ENCODE measurements at regions of chr16 and their contacts with region 1.

Region 1: DNA sequence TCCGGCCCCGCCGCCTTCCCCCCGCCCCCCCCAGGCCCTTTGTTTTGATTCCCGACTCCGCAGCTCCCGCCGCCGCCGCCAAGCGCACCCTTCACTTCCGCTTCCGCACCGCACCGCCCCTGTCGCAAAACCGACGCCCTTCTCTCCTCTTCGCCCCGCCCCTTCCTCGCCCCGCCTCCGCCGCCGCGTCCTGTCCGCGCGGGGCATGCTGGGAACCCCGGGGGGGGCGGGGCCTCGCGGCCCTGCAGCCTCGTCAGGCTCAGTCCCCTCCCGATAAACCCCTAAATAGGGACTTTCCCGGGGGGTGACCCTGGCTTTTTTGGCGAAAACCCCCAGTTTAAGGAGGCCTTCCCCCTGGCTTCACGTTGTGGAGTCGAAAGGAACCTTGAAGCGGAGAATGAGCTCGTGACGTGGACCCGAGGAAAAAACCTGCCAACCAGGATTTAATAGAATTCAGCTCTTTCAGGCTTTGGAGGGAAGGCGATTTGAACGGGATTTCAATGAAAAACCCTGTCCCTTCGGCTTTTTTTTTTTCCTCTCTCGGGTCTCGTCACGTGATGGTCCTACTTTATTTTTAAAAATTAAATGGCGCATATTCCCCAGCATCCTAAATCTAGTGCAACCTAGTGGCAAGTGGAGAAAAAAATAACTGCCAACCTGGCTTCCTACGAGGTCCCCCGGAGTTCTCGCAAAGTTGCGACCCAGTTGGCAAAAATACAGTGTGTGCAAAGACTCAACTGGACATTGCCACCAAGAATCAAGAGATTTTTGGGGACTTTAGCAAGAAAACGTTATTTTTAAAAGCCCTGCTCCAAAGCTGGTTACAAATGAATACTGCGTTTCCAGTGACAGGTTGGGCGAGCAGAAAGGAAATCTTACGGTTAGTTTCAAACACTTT is at the start of gene MARF1:
- DNase-seq: peak; percentile 96
- H3K4me3 Mint-ChIP-seq: peak within 1 kb of the TSS; percentile 78
- H3K27ac Mint-ChIP-seq: peak within 1 kb of the TSS; percentile 97
- H3K4me1 Mint-ChIP-seq: peaks cover 20% of the 10 kb centered on the region
- H3K27me3 Mint-ChIP-seq: no peaks in the 10 kb centered on the region
- CTCF ChIP-seq: peak; percentile 29
- total RNA-seq, gene MARF1: 48.1 and 56.2 TPM in 2 replicates

Region 2: GRCh38 chr16:15592324-15592723 is 51.0 kb before region 1 on chr16:
- CTCF ChIA-PET with region 1: interaction called, 6 read pairs
- POLR2A ChIA-PET with region 1: interaction called, 24 read pairs
- intact Hi-C with region 1: no loop called
- DNase-seq: no peak
- H3K4me3 Mint-ChIP-seq: no peak overlapping the region
- H3K27ac Mint-ChIP-seq: no peak overlapping the region
- H3K4me1 Mint-ChIP-seq: peaks cover 17% of the 10 kb centered on the region
- H3K27me3 Mint-ChIP-seq: no peaks in the 10 kb centered on the region
- CTCF ChIP-seq: no peak

Region 3: DNA sequence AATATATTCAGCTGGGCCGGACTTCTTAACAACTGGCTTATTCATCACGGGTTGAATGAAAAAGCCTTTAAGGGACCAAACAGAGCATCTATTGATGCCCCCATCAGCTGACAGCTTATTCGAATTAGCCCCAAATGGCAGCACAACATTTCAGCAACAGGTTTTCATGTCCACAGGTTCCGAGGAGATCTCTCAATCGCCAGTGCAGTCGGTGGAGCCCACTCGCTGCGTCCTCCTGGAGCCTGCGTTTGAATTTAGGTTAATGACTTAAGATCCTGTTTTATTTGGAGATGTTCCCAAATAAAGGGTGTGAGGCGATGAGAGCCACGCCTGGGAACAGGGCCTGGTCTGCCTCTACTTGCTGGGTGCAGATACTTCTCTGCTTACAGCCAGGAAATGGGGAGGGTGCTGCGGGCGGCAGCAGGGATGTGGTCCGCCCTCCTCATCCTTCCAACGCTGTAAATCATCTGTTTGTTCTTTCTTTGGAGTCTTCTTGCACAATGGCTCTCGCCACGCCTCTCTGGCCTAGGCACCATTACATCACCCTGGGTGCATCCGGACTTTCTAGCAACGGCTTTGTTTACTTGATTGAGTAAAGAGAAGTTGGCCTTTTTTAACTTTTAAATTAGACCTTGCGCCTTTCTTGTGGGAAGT is 29.3 kb after region 1 on chr16:
- CTCF ChIA-PET with region 1: interaction called, 17 read pairs
- POLR2A ChIA-PET with region 1: interaction called, 173 read pairs
- intact Hi-C with region 1: loop called (anchors 1 kb)
- DNase-seq: peak; percentile 99
- H3K4me3 Mint-ChIP-seq: peak overlapping the region; percentile 63
- H3K27ac Mint-ChIP-seq: peak overlapping the region; percentile 99
- H3K4me1 Mint-ChIP-seq: peaks cover 30% of the 10 kb centered on the region
- H3K27me3 Mint-ChIP-seq: no peaks in the 10 kb centered on the region
- CTCF ChIP-seq: no peak

Region 4: GRCh38 chr16:15690296-15690695 is 47.0 kb after region 1 on chr16:
- CTCF ChIA-PET with region 1: interaction called, 6 read pairs
- POLR2A ChIA-PET with region 1: interaction called, 10 read pairs
- intact Hi-C with region 1: no loop called
- DNase-seq: peak; percentile 11
- H3K4me3 Mint-ChIP-seq: no peak overlapping the region
- H3K27ac Mint-ChIP-seq: peak overlapping the region; percentile 39
- H3K4me1 Mint-ChIP-seq: peaks cover 6% of the 10 kb centered on the region
- H3K27me3 Mint-ChIP-seq: no peaks in the 10 kb centered on the region
- CTCF ChIP-seq: no peak

Measured in MCF 10A (cell line).